Psoas muscle (tissue), 8 donors: ENCODE measurements at regions of chr2 and their contacts with region 1.

Region 1: GRCh38 chr2:206378835-206379234 is 64.5 kb upstream of the ADAM23 start:
- DNase-seq: no peak
- ATAC-seq: peak; percentile 95 to 98 (median 98)
- H3K4me3 ChIP-seq: peak overlapping the region; percentile 45
- H3K27ac ChIP-seq: peak overlapping the region; percentile 88
- H3K4me1 ChIP-seq: peaks cover 18% of the 10 kb centered on the region
- H3K27me3 ChIP-seq: no peaks in the 10 kb centered on the region
- CTCF ChIP-seq: no peak

Region 2: GRCh38 chr2:206274434-206275268 is 104.2 kb before region 1 on chr2 and contains the start of gene ZDBF2:
- intact Hi-C with region 1: loop called in 1 of 2 experiments (anchors 5 kb)
- DNase-seq: peak; percentile 48 to 70
- ATAC-seq: peak; percentile 91 to 92 (median 92)
- H3K4me3 ChIP-seq: peak within 1 kb of the TSS; percentile 83
- H3K27ac ChIP-seq: peak within 1 kb of the TSS; percentile 78
- H3K4me1 ChIP-seq: no peaks in the 10 kb centered on the region
- H3K27me3 ChIP-seq: peaks cover 0 to 49% (median 6%) of the 10 kb centered on the region in 3 donors
- CTCF ChIP-seq: no peak
- total RNA-seq, gene ZDBF2: 7.1 to 20.8 (median 15.3) TPM

Region 3: GRCh38 chr2:206423149-206423548 is 44.3 kb after region 1 on chr2:
- intact Hi-C with region 1: no loop called
- DNase-seq: no peak
- ATAC-seq: no peak
- H3K4me3 ChIP-seq: no peak overlapping the region
- H3K27ac ChIP-seq: no peak overlapping the region
- H3K4me1 ChIP-seq: no peaks in the 10 kb centered on the region
- H3K27me3 ChIP-seq: no peaks in the 10 kb centered on the region
- CTCF ChIP-seq: no peak

Region 4: GRCh38 chr2:206442833-206443734 is 64.2 kb after region 1 on chr2 and contains the start of gene ADAM23:
- intact Hi-C with region 1: loop called in 1 of 2 experiments (anchors 5 kb)
- DNase-seq: peak; percentile 54 to 77
- ATAC-seq: peak; percentile 73 to 92 (median 80)
- H3K4me3 ChIP-seq: peak within 1 kb of the TSS; percentile 79
- H3K27ac ChIP-seq: peak within 1 kb of the TSS; percentile 70
- H3K4me1 ChIP-seq: peaks cover 13% of the 10 kb centered on the region
- H3K27me3 ChIP-seq: no peaks in the 10 kb centered on the region
- CTCF ChIP-seq: peak; percentile 27
- total RNA-seq, gene ADAM23: 6.0 to 9.2 (median 6.3) TPM